ENCODE measurements at regions of chr16 and their contacts with region 1.

Region 1: GRCh38 chr16:11667824-11668622 is at the start of gene SNN:
- DNase-seq: peak; percentile 78 to 88
- ATAC-seq: peak; percentile 57 to 60
- H3K4me3 ChIP-seq: peak within 1 kb of the TSS; percentile 79 to 99 (median 88)
- H3K27ac ChIP-seq: peak within 1 kb of the TSS; percentile 91 to 99 (median 97)
- H3K4me1 ChIP-seq: peaks cover 36 to 41% of the 10 kb centered on the region in 2 donors
- H3K27me3 ChIP-seq: no peaks in the 10 kb centered on the region
- CTCF ChIP-seq: no peak
- POLR2A ChIP-seq: peak; percentile 67 to 73
- total RNA-seq, gene SNN: 22.5 to 94.5 (median 78.1) TPM

Region 2: GRCh38 chr16:11497851-11498289 is 170.2 kb before region 1 on chr16:
- in situ Hi-C with region 1: no loop called
- intact Hi-C with region 1: loop called (anchors 2 kb)
- DNase-seq: peak in 1 of 2 donors; percentile 59
- ATAC-seq: no peak
- H3K4me3 ChIP-seq: no peak overlapping the region
- H3K27ac ChIP-seq: peak overlapping the region; percentile 84 to 96 (median 92)
- H3K4me1 ChIP-seq: peaks cover 33 to 34% of the 10 kb centered on the region in 2 donors
- H3K27me3 ChIP-seq: no peaks in the 10 kb centered on the region
- CTCF ChIP-seq: no peak
- POLR2A ChIP-seq: no peak

Measured in gastrocnemius medialis (tissue), 4 donors.